Mammary epithelial cell (primary cell): ENCODE measurements at regions of chr9 and their contacts with region 1.

Region 1: GRCh38 chr9:96854073-96854876 is at the start of gene ZNF782:
- DNase-seq: peak; percentile 92
- H3K4me3 ChIP-seq: peak within 1 kb of the TSS; percentile 80 to 92 (median 90)
- H3K27ac ChIP-seq: peak within 1 kb of the TSS; percentile 41
- H3K4me1 ChIP-seq: peaks cover 31% of the 10 kb centered on the region
- H3K27me3 ChIP-seq: no peaks in the 10 kb centered on the region
- CTCF ChIP-seq: no peak
- total RNA-seq, gene ZNF782: 3.7 to 5.5 TPM

Region 2: GRCh38 chr9:97038909-97039781 is 184.9 kb after region 1 on chr9 and contains the start of gene CTSV:
- CTCF ChIA-PET with region 1: no interaction called
- dilution Hi-C with region 1: no loop called
- in situ Hi-C with region 1: no loop called
- intact Hi-C with region 1: loop called (anchors 2 kb)
- DNase-seq: peak; percentile 92
- H3K4me3 ChIP-seq: peak within 1 kb of the TSS; percentile 68 to 91 (median 76)
- H3K27ac ChIP-seq: peak within 1 kb of the TSS; percentile 97
- H3K4me1 ChIP-seq: peaks cover 6% of the 10 kb centered on the region
- H3K27me3 ChIP-seq: no peaks in the 10 kb centered on the region
- CTCF ChIP-seq: no peak
- total RNA-seq, gene CTSV: 22.2 to 101 TPM

Region 3: GRCh38 chr9:97109194-97109811 is 255.0 kb after region 1 on chr9:
- CTCF ChIA-PET with region 1: interaction called, 4 read pairs
- dilution Hi-C with region 1: no loop called
- in situ Hi-C with region 1: loop called (anchors 5 to 25 kb)
- intact Hi-C with region 1: loop called (anchors 1 kb)
- DNase-seq: peak; percentile 69
- H3K4me3 ChIP-seq: no peak overlapping the region
- H3K27ac ChIP-seq: no peak overlapping the region
- H3K4me1 ChIP-seq: peaks cover 4% of the 10 kb centered on the region
- H3K27me3 ChIP-seq: no peaks in the 10 kb centered on the region
- CTCF ChIP-seq: peak; percentile 63 to 95

Region 4: DNA sequence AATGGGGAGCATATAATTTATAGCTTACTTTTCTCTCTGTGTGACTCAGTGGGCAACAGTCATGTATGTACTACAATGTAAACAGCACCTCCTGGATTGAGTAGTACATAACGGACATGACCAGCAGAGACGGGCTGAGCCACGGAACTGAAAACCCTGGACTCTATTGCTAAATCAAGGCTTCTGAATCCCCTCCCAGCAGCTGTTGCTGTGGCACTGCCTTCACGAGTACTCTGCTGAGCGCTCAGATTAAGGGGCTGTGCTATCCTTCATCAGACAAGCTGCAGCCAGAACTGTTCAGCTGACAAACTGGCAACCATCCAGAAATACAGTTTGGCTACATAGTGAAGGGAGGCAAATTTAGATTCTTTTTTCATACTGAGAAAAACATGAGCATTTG is 321.9 kb after region 1 on chr9:
- CTCF ChIA-PET with region 1: no interaction called
- dilution Hi-C with region 1: no loop called
- in situ Hi-C with region 1: no loop called
- intact Hi-C with region 1: no loop called
- DNase-seq: no peak
- H3K4me3 ChIP-seq: no peak overlapping the region
- H3K27ac ChIP-seq: no peak overlapping the region
- H3K4me1 ChIP-seq: peaks cover 7% of the 10 kb centered on the region
- H3K27me3 ChIP-seq: no peaks in the 10 kb centered on the region
- CTCF ChIP-seq: no peak

Region 5: GRCh38 chr9:97237951-97238851 is 383.9 kb after region 1 on chr9:
- CTCF ChIA-PET with region 1: no interaction called
- dilution Hi-C with region 1: no loop called
- in situ Hi-C with region 1: no loop called
- intact Hi-C with region 1: loop called (anchors 5 kb)
- DNase-seq: peak; percentile 75
- H3K4me3 ChIP-seq: peak overlapping the region; percentile 42 to 67 (median 51)
- H3K27ac ChIP-seq: no peak overlapping the region
- H3K4me1 ChIP-seq: peaks cover 3% of the 10 kb centered on the region
- H3K27me3 ChIP-seq: no peaks in the 10 kb centered on the region
- CTCF ChIP-seq: no peak

Region 6: GRCh38 chr9:97398999-97399758 is 544.9 kb after region 1 on chr9:
- CTCF ChIA-PET with region 1: interaction called, 4 read pairs
- dilution Hi-C with region 1: no loop called
- in situ Hi-C with region 1: loop called (anchors 25 kb)
- intact Hi-C with region 1: loop called (anchors 1 kb)
- DNase-seq: peak; percentile 89
- H3K4me3 ChIP-seq: no peak overlapping the region
- H3K27ac ChIP-seq: no peak overlapping the region
- H3K4me1 ChIP-seq: peaks cover 7% of the 10 kb centered on the region
- H3K27me3 ChIP-seq: no peaks in the 10 kb centered on the region
- CTCF ChIP-seq: peak; percentile 87 to 93

Region 7: GRCh38 chr9:97615439-97616072 is 761.3 kb after region 1 on chr9:
- CTCF ChIA-PET with region 1: no interaction called
- dilution Hi-C with region 1: no loop called
- in situ Hi-C with region 1: loop called (anchors 10 to 25 kb)
- intact Hi-C with region 1: loop called (anchors 5 kb)
- DNase-seq: peak; percentile 35
- H3K4me3 ChIP-seq: no peak overlapping the region
- H3K27ac ChIP-seq: no peak overlapping the region
- H3K4me1 ChIP-seq: no peaks in the 10 kb centered on the region
- H3K27me3 ChIP-seq: no peaks in the 10 kb centered on the region
- CTCF ChIP-seq: peak; percentile 76 to 85